CD8-positive, alpha-beta T cell (primary cell): ENCODE measurements at regions of chr2 and their contacts with region 1.

Region 1: GRCh38 chr2:177772529-177772928 is 300.0 kb downstream of the PDE11A start:
- DNase-seq: peak in 2 of 9 experiments; percentile 39 to 52
- ATAC-seq: no peak
- H3K4me3 ChIP-seq: no peak overlapping the region
- H3K4me3 Mint-ChIP-seq: no peak overlapping the region
- H3K27ac ChIP-seq: no peak overlapping the region
- H3K27ac Mint-ChIP-seq: no peak overlapping the region
- H3K4me1 ChIP-seq: no peaks in the 10 kb centered on the region
- H3K4me1 Mint-ChIP-seq: peaks cover 7% of the 10 kb centered on the region
- H3K27me3 ChIP-seq: no peaks in the 10 kb centered on the region
- H3K27me3 Mint-ChIP-seq: no peaks in the 10 kb centered on the region
- CTCF ChIP-seq: peak; percentile 73

Region 2: GRCh38 chr2:177842243-177842642 is 69.7 kb after region 1 on chr2:
- CTCF ChIA-PET with region 1: no interaction called
- POLR2A ChIA-PET with region 1: no interaction called
- intact Hi-C with region 1: loop called in 1 of 2 experiments (anchors 5 kb)
- DNase-seq: no peak
- ATAC-seq: no peak
- H3K4me3 ChIP-seq: no peak overlapping the region
- H3K4me3 Mint-ChIP-seq: no peak overlapping the region
- H3K27ac ChIP-seq: no peak overlapping the region
- H3K27ac Mint-ChIP-seq: no peak overlapping the region
- H3K4me1 ChIP-seq: no peaks in the 10 kb centered on the region
- H3K4me1 Mint-ChIP-seq: no peaks in the 10 kb centered on the region
- H3K27me3 ChIP-seq: no peaks in the 10 kb centered on the region
- H3K27me3 Mint-ChIP-seq: no peaks in the 10 kb centered on the region
- CTCF ChIP-seq: no peak

Region 3: DNA sequence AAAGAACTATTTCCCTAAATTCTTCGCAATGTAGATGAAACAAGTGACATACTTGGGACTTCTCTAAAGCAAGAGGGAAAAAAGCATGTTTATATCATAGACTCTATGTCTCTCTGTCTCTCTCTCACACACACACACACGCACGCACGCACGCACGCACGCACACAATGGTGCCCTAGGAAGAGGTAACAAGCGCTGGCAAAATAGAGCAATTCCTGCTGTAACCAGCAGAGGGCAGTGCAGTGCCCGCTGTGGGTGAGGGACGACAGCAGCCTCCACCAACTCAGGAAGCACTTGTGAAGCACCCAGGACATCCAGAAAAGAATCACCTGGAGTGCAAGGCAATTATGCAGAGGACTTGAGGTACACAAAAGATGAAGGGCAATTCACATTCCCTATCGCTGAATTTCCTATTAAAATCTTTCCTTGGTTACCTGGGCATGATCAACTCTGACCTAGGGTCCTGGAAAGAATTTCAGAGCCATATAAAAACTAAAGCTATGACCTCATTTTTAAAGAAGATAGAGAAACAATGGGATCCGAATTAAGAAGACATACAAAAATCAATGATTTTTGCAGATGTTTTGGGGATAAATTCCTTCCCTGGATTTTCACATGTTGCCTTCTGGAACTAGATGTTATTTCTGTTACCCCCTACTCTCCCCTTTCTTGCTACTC is 133.7 kb after region 1 on chr2:
- CTCF ChIA-PET with region 1: interaction called, 3 read pairs
- POLR2A ChIA-PET with region 1: no interaction called
- intact Hi-C with region 1: loop called in 1 of 2 experiments (anchors 5 kb)
- DNase-seq: peak; percentile 22 to 66 (median 44)
- ATAC-seq: peak; percentile 71
- H3K4me3 ChIP-seq: no peak overlapping the region
- H3K4me3 Mint-ChIP-seq: no peak overlapping the region
- H3K27ac ChIP-seq: no peak overlapping the region
- H3K27ac Mint-ChIP-seq: no peak overlapping the region
- H3K4me1 ChIP-seq: no peaks in the 10 kb centered on the region
- H3K4me1 Mint-ChIP-seq: peaks cover 13% of the 10 kb centered on the region
- H3K27me3 ChIP-seq: no peaks in the 10 kb centered on the region
- H3K27me3 Mint-ChIP-seq: peaks cover 3% of the 10 kb centered on the region
- CTCF ChIP-seq: peak; percentile 71